Dorsolateral prefrontal cortex (tissue), 120 donors: ENCODE measurements at regions of chr12 and their contacts with region 1.

Region 1: DNA sequence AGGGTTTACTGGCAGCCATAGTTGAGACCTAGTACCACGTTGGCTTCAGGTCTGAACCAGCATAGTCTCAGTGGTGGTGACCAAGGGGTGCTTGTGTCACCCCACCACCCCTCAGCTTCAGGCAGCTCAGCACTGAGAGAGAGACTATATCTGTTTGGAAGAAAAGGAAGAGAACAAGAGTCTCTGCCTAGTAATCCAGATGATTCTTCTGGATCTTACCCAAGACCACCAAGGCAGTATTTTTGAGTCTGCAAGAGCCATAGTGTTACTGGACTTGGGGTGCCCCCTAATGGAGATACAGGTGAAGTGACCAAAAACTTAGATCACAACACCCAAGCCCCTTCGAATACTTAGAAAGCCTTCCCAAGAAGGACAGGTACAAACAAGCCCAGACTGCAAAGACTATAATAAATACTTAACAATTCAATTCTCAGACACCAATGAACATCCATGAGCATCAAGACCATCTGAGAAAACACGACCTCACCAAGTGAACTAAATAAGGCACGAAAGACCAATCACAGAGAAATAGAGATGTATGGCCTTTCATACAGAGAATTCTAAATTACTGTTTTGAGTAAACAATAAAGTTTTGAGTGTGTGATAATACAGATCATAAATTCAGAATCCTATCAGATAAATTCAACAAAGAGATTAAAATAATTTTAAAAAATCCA is 107.0 kb downstream of the HELB start:
- DNase-seq: no peak
- H3K4me3 ChIP-seq: no peak overlapping the region
- H3K27ac ChIP-seq: no peak overlapping the region
- H3K27me3 ChIP-seq: no peaks in the 10 kb centered on the region
- CTCF ChIP-seq: peak; percentile 42 to 79 (median 66)

Region 2: DNA sequence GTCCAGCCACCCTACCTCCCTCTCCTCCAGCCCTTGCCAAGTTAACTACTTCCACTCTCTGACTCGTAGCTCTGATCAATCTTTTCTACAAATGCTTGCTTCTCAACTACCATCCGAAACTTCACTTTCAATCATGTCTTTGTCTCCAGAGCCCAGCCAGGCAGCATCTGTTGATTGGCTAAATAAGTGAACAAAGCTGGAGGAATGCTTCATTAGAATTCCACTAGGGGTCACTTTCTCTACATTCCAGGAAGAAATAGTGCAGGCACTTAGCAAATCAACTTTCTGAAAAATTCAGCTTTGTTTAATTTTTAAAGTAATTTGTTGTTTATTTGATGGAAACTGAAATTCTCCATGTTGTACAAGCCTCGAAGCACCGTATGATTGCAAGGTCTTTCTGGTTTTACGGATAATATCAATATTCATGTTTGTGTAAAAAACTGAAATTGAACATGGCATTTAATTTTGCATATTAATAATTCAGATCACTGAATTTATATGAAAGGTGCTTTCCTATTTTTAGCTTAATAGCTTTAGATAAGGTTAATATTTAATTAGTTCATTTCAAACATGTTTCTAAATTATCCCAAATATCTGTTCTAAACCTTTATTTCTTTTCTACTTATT is 139.5 kb before region 1 on chr12:
- intact Hi-C with region 1: loop called (anchors 10 kb)
- DNase-seq: peak in 2 of 10 donors; percentile 28 to 36
- H3K4me3 ChIP-seq: peak overlapping the region in 2 of 59 donors; percentile 7 to 11
- H3K27ac ChIP-seq: peak overlapping the region in 13 of 59 donors; percentile 3 to 70 (median 28)
- H3K27me3 ChIP-seq: no peaks in the 10 kb centered on the region
- CTCF ChIP-seq: peak; percentile 55 to 82 (median 73)

Region 3: DNA sequence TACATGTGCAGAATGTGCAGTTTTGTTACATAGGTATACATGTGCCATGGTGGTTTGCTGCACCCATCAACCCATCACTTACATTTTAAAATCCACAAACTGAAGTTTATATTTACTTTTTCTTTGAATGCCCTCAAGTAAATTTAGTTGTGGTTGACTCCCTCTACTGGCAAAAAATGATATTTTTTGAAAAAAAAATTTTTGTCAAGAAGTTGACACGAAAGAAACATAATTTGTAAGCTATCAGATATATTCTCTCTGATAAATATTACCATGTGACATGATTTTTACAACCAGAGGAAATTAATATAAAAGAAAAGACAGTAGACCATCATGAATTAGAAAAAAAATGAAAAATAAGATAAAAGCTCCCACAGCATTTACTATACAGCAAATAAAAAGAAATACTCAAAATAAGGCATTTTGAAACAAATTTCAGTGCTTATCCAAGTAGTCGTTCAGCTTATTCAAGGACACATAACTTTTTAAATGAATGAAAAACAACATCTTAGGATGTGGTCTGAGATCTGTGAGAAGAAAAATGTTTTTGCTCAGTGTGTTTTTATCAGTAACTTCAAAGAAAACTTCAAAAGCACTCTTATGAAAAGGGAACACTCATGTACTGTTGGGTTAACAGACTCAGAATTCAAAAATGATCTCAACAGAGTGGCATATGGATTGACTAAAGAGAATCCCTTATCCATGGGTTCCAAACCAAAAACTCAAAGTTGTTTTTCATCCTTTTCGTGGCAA is 299.5 kb after region 1 on chr12:
- intact Hi-C with region 1: no loop called
- DNase-seq: no peak
- H3K4me3 ChIP-seq: no peak overlapping the region
- H3K27ac ChIP-seq: no peak overlapping the region
- H3K27me3 ChIP-seq: no peaks in the 10 kb centered on the region
- CTCF ChIP-seq: peak; percentile 33 to 68 (median 53)